Posterior cingulate gyrus (tissue), 11 donors: ENCODE measurements at regions of chr12 and their contacts with region 1.

Region 1: GRCh38 chr12:98593351-98594049 is at the start of gene SLC25A3:
- DNase-seq: peak; percentile 92 to 100 (median 96)

Region 2: DNA sequence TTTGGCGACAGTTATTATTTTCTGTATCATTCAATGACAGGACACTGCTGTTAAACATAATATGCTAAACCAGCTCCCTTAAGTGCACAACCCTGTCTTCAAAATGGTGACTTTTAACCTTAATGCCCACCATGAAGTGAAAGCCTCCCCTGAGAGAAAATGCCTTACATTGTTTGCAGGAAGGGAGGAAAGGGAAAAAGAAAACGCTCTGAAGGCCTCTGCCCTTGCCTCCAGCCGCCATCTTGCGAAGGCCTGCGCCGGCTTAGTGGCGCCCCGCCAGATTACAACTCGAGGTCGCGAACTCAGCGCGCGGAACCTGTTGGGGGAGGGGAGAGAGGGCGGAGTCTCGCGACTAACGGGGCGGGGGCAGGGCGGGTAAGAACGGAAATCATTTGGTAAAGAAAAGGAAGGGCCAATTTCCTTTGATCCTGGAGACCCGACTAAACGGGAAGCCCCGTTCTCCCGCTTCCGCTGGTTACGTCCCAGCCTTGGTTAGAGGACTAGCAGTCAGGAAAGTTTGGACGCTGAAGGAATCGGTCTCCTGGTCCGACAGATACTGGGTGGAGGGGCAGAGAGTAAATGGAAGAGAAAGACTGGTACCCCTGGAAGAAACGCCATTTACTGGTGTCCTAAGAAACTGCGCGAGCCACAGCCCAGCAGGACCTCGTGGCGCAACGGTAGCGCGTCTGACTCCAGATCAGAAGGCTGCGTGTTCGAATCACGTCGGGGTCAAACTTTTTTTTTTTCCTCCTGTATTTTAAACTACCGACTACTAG is 89.7 kb before region 1 on chr12:
- intact Hi-C with region 1: loop called (anchors 5 kb)
- DNase-seq: peak; percentile 80 to 98 (median 85)

Region 3: DNA sequence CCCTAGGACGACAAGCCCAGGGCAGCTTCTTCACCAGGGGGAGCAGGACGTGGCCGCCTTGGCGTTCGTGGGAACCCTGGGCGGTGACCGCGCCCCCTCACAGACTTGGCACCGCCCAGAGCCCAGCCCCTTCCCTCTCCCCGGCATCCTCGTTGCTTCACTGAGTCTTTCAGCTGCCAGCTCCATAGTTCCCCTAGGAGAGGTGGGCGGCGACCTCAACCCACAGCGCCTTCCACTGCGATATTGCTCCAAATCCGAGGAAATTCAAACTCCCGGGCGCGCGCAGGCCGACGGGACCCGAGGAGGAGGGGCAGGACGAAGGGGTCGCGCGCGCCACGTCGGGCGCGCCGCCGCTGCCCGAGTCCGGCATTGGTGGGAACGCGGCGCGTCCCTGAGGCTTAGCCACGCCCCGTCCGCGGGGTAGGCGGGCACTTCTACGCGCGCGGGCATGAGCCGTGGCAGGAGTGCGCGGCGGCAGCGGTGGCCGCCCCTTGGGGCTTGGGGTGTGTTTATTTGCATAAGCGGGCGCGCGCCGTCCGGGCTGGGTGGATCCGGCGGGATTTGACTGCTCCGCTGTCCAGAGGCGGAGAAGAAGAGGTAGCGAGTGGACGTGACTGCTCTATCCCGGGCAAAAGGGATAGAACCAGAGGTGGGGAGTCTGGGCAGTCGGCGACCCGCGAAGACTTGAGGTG is 51.4 kb after region 1 on chr12 and contains the starts of genes APAF1 and IKBIP:
- intact Hi-C with region 1: loop called (anchors 1 kb)
- DNase-seq: peak; percentile 92 to 100 (median 96)